Aorta (tissue), 5 donors: ENCODE measurements at regions of chr3 and their contacts with region 1.

Region 1: DNA sequence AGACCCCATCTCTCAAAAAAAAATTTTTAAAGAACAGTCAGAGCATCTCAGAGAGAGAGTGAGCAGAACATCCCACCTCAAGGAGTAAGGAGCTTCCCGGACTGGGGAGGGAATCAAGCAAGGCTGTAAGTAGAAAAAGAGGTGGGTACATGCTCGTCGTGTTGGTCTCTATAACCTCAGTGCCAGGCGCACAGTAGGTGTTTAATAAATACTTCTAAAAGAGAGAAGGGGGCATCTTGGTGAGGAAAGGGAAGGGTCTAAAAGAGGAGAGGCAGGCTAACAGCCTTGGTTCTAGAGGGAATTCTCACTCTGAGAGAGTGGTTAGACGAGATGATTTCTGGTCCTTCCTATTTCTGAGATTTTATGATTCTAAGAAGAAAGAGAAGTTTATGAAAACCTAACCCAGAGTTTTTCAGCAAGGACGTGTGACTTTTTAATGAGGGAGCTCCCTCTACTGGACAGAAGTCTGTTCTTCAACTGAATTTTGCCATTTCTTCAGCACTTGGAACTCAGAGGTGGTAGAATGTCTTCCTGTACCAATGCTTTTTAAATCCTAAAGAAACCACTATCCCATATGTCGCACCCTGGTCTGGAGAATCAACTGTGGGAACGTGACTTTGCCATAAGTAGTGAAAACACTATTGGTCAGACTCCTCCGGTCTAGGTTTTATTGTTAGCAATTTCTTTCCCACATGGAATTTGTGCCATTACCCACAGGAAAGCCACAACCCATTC is 199.7 kb upstream of the LMCD1 start:
- DNase-seq: no peak
- ATAC-seq: peak; percentile 75
- H3K4me3 ChIP-seq: no peak overlapping the region
- H3K27ac ChIP-seq: no peak overlapping the region
- H3K4me1 ChIP-seq: peaks cover 0 to 3% of the 10 kb centered on the region in 2 donors
- H3K27me3 ChIP-seq: no peaks in the 10 kb centered on the region

Region 2: GRCh38 chr3:6799264-6799915 is 1502.5 kb before region 1 on chr3:
- intact Hi-C with region 1: loop called in 1 of 2 experiments (anchors 10 kb)
- DNase-seq: no peak
- ATAC-seq: no peak
- H3K4me3 ChIP-seq: no peak overlapping the region
- H3K27ac ChIP-seq: no peak overlapping the region
- H3K4me1 ChIP-seq: no peaks in the 10 kb centered on the region
- H3K27me3 ChIP-seq: no peaks in the 10 kb centered on the region

Region 3: GRCh38 chr3:8136553-8136952 is 165.3 kb before region 1 on chr3:
- intact Hi-C with region 1: loop called in 1 of 2 experiments (anchors 10 kb)
- DNase-seq: no peak
- ATAC-seq: no peak
- H3K4me3 ChIP-seq: no peak overlapping the region
- H3K27ac ChIP-seq: no peak overlapping the region
- H3K4me1 ChIP-seq: no peaks in the 10 kb centered on the region
- H3K27me3 ChIP-seq: no peaks in the 10 kb centered on the region

Region 4: DNA sequence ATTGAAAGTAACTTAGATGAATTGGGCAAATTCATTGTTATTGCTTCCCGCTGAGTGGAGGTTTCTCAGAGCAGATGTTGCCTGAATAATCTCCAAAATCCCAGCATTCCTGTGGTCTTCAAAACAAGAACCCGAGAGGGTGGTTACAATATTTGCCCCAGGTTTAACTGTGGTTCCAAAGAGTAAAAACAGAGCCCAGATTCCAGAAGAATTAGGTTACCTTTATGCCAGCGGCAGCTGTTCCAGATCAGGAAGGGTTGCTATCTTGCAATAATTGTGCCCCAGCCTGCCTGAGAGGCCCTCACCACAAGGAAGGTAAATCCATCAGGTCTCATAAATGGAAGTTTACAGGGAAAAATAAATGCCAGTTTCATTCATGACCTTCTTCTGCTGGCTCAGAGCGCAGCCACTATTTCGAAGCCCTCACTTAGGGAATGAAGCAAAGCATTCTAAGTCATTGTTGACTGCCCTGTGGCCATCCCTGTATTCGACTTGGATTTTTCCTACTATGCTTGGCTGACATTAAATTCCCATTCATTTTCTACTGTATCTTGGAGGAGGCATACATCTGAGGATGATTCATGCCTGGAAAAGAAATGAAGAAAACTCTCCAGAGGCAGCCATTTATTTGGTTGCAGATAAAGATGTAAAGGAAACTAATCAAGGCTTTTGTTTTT is 288.1 kb after region 1 on chr3:
- intact Hi-C with region 1: no loop called
- DNase-seq: no peak
- ATAC-seq: no peak
- H3K4me3 ChIP-seq: no peak overlapping the region
- H3K27ac ChIP-seq: peak overlapping the region; percentile 9 to 16
- H3K4me1 ChIP-seq: peaks cover 5 to 9% of the 10 kb centered on the region in 2 donors
- H3K27me3 ChIP-seq: no peaks in the 10 kb centered on the region